Posterior vena cava (tissue), 2 donors: ENCODE measurements at regions of chr10 and their contacts with region 1.

Region 1: GRCh38 chr10:128026614-128027300 is 99.5 kb downstream of the MKI67 start:
- DNase-seq: no peak

Region 2: GRCh38 chr10:128069351-128070051 is 42.7 kb after region 1 on chr10:
- intact Hi-C with region 1: no loop called
- DNase-seq: peak; percentile 92

Region 3: DNA sequence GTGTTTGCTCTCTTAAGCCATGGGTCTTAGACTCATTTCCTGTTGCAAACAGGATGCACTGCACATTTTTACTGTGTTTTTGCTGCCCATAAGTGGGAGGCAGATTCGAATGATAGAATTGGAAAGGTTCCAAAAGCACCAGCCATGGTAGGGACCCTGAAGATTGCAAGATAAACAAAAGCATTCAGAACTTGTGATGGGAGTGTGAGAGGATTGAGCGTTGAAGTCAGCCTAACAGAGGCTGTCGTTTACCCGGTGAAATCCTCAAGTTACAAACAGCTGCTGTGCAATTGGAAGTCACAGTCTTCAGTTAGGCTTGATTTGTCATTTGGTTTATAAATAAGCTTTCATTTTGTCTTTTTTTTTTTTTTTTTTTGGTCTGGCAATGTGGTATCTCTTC is 292.2 kb after region 1 on chr10:
- intact Hi-C with region 1: no loop called
- DNase-seq: no peak

Region 4: GRCh38 chr10:128779416-128779815 is 752.7 kb after region 1 on chr10:
- intact Hi-C with region 1: loop called in 1 of 2 experiments (anchors 5 kb)
- DNase-seq: no peak